Activated CD4-positive, alpha-beta T cell treated with anti-CD3 and anti-CD28 coated beads for 36 hours (primary cell): ENCODE measurements at regions of chr11 and their contacts with region 1.

Region 1: DNA sequence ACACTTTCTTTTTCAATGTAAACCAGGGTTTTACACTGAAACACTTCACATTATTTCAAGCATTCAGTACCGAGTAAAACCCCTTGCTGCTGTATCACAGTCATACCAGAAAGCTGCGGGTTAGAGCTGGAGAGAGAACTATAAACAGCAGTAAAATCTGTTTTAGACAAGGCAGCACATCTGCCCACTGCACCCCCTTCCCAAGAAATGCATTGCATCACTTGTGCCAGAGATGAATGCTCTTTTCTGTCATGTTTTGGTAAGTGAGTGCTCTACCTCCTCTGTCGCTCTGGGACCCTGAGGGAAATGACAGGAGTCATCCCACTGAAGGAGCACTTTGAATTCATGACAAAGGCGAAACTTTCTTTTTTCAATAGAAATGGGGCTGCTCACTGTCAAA is 107.2 kb downstream of the MAML2 start:
- DNase-seq: peak; percentile 86
- ATAC-seq: peak; percentile 98
- H3K4me3 Mint-ChIP-seq: peak overlapping the region; percentile 45
- H3K27ac Mint-ChIP-seq: peak overlapping the region; percentile 78
- H3K4me1 Mint-ChIP-seq: peaks cover 53% of the 10 kb centered on the region
- H3K27me3 Mint-ChIP-seq: no peaks in the 10 kb centered on the region

Region 2: DNA sequence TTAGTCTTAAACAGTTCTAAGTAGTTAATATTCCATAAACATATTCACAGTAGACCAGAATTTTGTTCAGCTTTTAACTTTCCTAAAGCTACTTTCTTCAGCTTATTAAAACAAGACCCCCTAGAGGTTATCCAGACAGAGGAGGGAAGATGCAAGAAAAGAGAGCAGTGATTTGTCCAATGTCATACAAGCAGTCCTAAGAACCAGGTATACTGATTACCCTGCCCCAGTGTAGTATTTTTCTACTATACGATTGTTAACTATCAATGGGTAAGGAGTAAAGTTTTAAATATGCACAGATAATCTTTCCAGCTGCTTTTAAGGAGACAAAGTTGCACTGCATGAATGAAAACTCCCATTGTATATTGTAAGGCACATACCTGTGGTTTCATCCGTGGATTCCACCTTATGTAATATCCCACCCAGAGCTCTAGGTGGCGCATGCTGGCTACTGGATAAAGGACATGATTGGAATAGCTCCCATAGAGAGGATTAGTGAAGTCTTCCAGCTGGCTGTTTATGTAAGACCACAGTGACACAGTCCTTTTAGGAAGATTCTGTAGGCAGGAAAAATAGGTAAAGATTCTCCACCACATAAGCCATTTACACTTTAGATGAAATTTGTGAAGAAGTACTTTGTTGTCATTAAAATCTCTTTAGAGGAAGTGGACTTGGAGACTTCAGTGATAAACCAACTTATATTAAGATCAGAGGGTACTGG is 399.8 kb before region 1 on chr11:
- CTCF ChIA-PET with region 1: no interaction called
- POLR2A ChIA-PET with region 1: no interaction called
- intact Hi-C with region 1: loop called (anchors 5 kb)
- DNase-seq: peak; percentile 69
- ATAC-seq: peak; percentile 87
- H3K4me3 Mint-ChIP-seq: no peak overlapping the region
- H3K27ac Mint-ChIP-seq: no peak overlapping the region
- H3K4me1 Mint-ChIP-seq: peaks cover 6% of the 10 kb centered on the region
- H3K27me3 Mint-ChIP-seq: no peaks in the 10 kb centered on the region

Region 3: DNA sequence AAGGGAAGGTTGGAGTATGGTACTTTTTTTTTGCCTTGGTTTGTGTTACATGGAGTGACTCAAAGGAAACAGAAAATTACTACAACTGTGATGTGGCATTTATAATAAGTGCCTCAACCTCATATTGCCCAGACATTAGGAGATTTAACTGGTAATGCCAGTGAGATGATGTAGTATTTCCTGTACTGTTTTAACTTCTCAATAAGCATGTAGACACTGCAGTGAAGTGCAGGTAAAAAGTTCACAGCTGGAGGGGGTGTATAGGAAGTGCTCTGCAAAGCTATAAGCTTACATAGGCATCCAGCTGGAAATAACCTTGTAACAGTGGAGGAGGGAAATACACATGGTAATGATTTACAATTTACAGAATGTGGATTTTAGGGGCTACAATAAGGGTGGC is 173.6 kb before region 1 on chr11:
- CTCF ChIA-PET with region 1: interaction called, 3 read pairs
- POLR2A ChIA-PET with region 1: no interaction called
- intact Hi-C with region 1: loop called in 1 of 2 experiments (anchors 1 kb)
- DNase-seq: peak; percentile 65
- ATAC-seq: peak; percentile 87
- H3K4me3 Mint-ChIP-seq: peak overlapping the region; percentile 42
- H3K27ac Mint-ChIP-seq: peak overlapping the region; percentile 94
- H3K4me1 Mint-ChIP-seq: peaks cover 81% of the 10 kb centered on the region
- H3K27me3 Mint-ChIP-seq: no peaks in the 10 kb centered on the region

Region 4: GRCh38 chr11:96082002-96082899 is 153.5 kb before region 1 on chr11:
- CTCF ChIA-PET with region 1: no interaction called
- POLR2A ChIA-PET with region 1: no interaction called
- intact Hi-C with region 1: no loop called
- DNase-seq: no peak
- ATAC-seq: no peak
- H3K4me3 Mint-ChIP-seq: no peak overlapping the region
- H3K27ac Mint-ChIP-seq: no peak overlapping the region
- H3K4me1 Mint-ChIP-seq: peaks cover 51% of the 10 kb centered on the region
- H3K27me3 Mint-ChIP-seq: no peaks in the 10 kb centered on the region

Region 5: DNA sequence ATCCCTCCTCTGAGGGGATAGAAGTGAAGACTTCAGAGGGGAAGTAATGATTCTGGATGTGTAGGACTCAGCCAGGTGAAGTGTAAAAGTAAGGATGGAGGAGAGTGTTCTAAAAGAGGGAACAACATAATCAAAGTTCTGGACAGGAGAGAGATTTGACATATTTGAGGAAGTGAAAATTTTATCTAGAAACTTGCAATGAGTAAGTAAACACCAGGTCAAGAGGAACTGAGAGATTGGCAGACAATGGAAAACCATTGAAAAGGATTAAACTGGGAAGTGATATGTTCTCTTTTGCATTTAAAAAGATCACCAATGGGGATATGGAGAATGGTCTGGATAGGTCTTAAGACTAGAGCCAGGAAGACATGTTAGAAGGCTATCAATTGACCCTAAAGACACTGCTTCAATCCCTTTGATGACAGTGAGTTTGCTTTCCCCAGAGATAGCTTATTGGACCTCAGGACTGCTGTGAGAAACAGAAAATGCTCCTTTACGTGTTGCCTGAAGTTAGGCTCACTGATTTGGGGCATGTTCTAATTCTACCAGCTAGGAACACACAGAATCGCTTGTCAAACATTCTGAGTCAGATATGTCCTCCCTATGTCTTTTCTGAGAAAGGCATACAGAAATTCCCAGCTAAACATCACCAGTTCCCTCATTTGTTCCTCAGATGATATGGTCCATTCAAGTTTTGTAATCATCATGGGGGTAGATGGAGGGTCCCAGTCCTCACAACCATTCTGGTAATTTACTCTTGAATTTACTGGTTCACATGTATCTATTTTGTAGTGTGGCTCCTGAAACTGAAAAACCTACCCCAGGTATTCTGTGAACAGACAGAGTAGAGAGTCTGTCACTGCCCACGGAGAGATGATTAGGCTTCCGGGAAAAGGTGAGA is 37.7 kb before region 1 on chr11:
- CTCF ChIA-PET with region 1: interaction called, 3 read pairs
- POLR2A ChIA-PET with region 1: interaction called, 6 read pairs
- intact Hi-C with region 1: loop called (anchors 1 to 2 kb)
- DNase-seq: no peak
- ATAC-seq: peak; percentile 50
- H3K4me3 Mint-ChIP-seq: peak overlapping the region; percentile 16
- H3K27ac Mint-ChIP-seq: peak overlapping the region; percentile 91
- H3K4me1 Mint-ChIP-seq: peaks cover 90% of the 10 kb centered on the region
- H3K27me3 Mint-ChIP-seq: no peaks in the 10 kb centered on the region

Region 6: GRCh38 chr11:96207459-96208449 is 28.0 kb before region 1 on chr11:
- CTCF ChIA-PET with region 1: interaction called, 8 read pairs
- POLR2A ChIA-PET with region 1: interaction called, 12 read pairs
- intact Hi-C with region 1: no loop called
- DNase-seq: peak; percentile 51
- ATAC-seq: peak; percentile 16
- H3K4me3 Mint-ChIP-seq: peak overlapping the region; percentile 51
- H3K27ac Mint-ChIP-seq: peak overlapping the region; percentile 95
- H3K4me1 Mint-ChIP-seq: peaks cover 93% of the 10 kb centered on the region
- H3K27me3 Mint-ChIP-seq: no peaks in the 10 kb centered on the region

Region 7: GRCh38 chr11:96595011-96595410 is 359.3 kb after region 1 on chr11:
- CTCF ChIA-PET with region 1: no interaction called
- POLR2A ChIA-PET with region 1: no interaction called
- intact Hi-C with region 1: no loop called
- DNase-seq: no peak
- ATAC-seq: no peak
- H3K4me3 Mint-ChIP-seq: no peak overlapping the region
- H3K27ac Mint-ChIP-seq: no peak overlapping the region
- H3K4me1 Mint-ChIP-seq: no peaks in the 10 kb centered on the region
- H3K27me3 Mint-ChIP-seq: no peaks in the 10 kb centered on the region